ENCODE measurements at regions of chr7 and their contacts with region 1.

Region 1: DNA sequence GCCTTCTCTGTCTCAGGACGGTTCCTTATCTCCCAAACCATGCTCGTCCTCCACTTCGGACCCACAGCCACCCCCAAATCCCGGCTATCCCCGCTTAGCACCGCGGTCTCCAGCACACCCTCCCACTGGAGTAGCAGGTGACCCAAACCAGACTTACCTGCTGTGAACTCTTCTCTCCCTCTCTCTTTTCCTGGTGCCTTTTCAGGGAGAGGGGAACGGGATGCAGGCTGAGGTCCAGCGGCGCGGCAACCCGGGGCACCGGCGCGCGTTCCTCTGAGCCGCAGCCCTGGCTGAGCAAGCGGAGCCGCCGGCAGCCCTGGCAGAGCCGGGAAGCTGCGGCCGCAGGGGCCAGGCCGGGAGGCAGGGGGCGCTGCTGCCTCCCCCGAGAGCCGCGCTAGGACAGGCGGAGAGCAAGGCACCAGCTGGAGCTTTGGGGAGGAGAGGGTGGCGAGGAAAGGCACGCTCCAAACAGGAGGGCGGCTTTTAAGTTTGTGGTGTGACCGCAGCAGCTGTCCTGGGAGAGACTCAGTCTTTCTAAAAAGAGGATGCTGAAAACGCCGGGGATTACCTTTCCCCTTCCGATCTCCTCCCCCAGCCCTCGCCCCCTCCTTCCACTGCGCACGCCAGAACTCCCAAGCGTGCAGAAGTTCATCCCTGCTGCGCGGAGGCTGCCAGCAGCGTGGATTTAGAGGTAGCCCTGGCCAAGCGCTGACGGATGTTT is at the start of gene SEMA3D:
- DNase-seq: peak; percentile 85 to 89
- H3K4me3 ChIP-seq: peak within 1 kb of the TSS; percentile 32 to 86 (median 58)
- H3K27ac ChIP-seq: peak within 1 kb of the TSS; percentile 76 to 92 (median 77)
- H3K4me1 ChIP-seq: peaks cover 7 to 12% of the 10 kb centered on the region in 2 donors
- H3K27me3 ChIP-seq: no peaks in the 10 kb centered on the region
- CTCF ChIP-seq: peak; percentile 50 to 92 (median 82)
- POLR2A ChIP-seq: peak in 1 of 2 donors; percentile 67
- total RNA-seq, gene SEMA3D: 65.8 to 131 (median 91.8) TPM

Region 2: GRCh38 chr7:85041605-85042216 is 145.0 kb before region 1 on chr7:
- intact Hi-C with region 1: loop called (anchors 5 kb)
- DNase-seq: peak; percentile 82 to 86
- H3K4me3 ChIP-seq: no peak overlapping the region
- H3K27ac ChIP-seq: no peak overlapping the region
- H3K4me1 ChIP-seq: no peaks in the 10 kb centered on the region
- H3K27me3 ChIP-seq: no peaks in the 10 kb centered on the region
- CTCF ChIP-seq: peak; percentile 37 to 85 (median 73)
- POLR2A ChIP-seq: no peak

Region 3: DNA sequence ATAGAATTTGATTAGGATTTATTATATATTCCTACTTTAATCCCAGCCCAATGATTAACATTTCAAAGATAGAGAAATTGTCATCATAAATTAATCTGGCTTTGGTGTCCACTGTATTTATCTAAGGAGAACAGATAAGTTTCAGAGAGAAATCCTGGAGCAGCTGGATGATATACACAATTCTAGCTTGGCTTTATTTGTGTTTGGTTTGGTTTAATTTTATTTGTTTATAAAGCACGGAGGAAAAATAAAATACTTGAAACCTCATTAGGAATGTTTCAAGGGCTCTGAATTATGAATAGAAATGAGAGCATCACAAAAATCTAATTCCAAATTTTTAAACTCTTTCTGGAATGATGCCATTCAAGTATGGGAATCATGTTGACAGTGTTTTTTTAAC is 41.9 kb before region 1 on chr7:
- intact Hi-C with region 1: no loop called
- DNase-seq: no peak
- H3K4me3 ChIP-seq: no peak overlapping the region
- H3K27ac ChIP-seq: no peak overlapping the region
- H3K4me1 ChIP-seq: no peaks in the 10 kb centered on the region
- H3K27me3 ChIP-seq: no peaks in the 10 kb centered on the region
- CTCF ChIP-seq: no peak
- POLR2A ChIP-seq: no peak

Region 4: GRCh38 chr7:85292908-85293576 is 106.4 kb after region 1 on chr7:
- intact Hi-C with region 1: no loop called
- DNase-seq: no peak
- H3K4me3 ChIP-seq: no peak overlapping the region
- H3K27ac ChIP-seq: no peak overlapping the region
- H3K4me1 ChIP-seq: no peaks in the 10 kb centered on the region
- H3K27me3 ChIP-seq: no peaks in the 10 kb centered on the region
- CTCF ChIP-seq: no peak
- POLR2A ChIP-seq: no peak

Region 5: GRCh38 chr7:85343484-85343883 is 156.8 kb after region 1 on chr7:
- intact Hi-C with region 1: no loop called
- DNase-seq: no peak
- H3K4me3 ChIP-seq: no peak overlapping the region
- H3K27ac ChIP-seq: no peak overlapping the region
- H3K4me1 ChIP-seq: no peaks in the 10 kb centered on the region
- H3K27me3 ChIP-seq: no peaks in the 10 kb centered on the region
- CTCF ChIP-seq: no peak
- POLR2A ChIP-seq: no peak

Region 6: GRCh38 chr7:85554236-85555178 is 367.8 kb after region 1 on chr7:
- intact Hi-C with region 1: loop called (anchors 10 kb)
- DNase-seq: no peak
- H3K4me3 ChIP-seq: no peak overlapping the region
- H3K27ac ChIP-seq: no peak overlapping the region
- H3K4me1 ChIP-seq: no peaks in the 10 kb centered on the region
- H3K27me3 ChIP-seq: no peaks in the 10 kb centered on the region
- CTCF ChIP-seq: peak in 5 of 6 experiments; percentile 38 to 76 (median 68)
- POLR2A ChIP-seq: no peak